ENCODE measurements at regions of chr1 and their contacts with region 1.

Region 1: GRCh38 chr1:84668185-84668584 is 22.1 kb downstream of the SSX2IP start:
- DNase-seq: peak in 1 of 2 experiments; percentile 15
- H3K4me3 ChIP-seq: no peak overlapping the region
- H3K4me3 Mint-ChIP-seq: no peak overlapping the region
- H3K27ac Mint-ChIP-seq: no peak overlapping the region
- H3K4me1 ChIP-seq: no peaks in the 10 kb centered on the region
- H3K4me1 Mint-ChIP-seq: no peaks in the 10 kb centered on the region
- H3K27me3 ChIP-seq: no peaks in the 10 kb centered on the region
- H3K27me3 Mint-ChIP-seq: no peaks in the 10 kb centered on the region
- CTCF ChIP-seq: peak in 1 of 2 experiments; percentile 17

Region 2: GRCh38 chr1:84724128-84724860 is 56.1 kb after region 1 on chr1:
- CTCF ChIA-PET with region 1: no interaction called
- POLR2A ChIA-PET with region 1: no interaction called
- intact Hi-C with region 1: no loop called
- DNase-seq: no peak
- H3K4me3 ChIP-seq: no peak overlapping the region
- H3K4me3 Mint-ChIP-seq: no peak overlapping the region
- H3K27ac Mint-ChIP-seq: no peak overlapping the region
- H3K4me1 ChIP-seq: peaks cover 25% of the 10 kb centered on the region
- H3K4me1 Mint-ChIP-seq: peaks cover 19% of the 10 kb centered on the region
- H3K27me3 ChIP-seq: no peaks in the 10 kb centered on the region
- H3K27me3 Mint-ChIP-seq: no peaks in the 10 kb centered on the region
- CTCF ChIP-seq: no peak

Region 3: DNA sequence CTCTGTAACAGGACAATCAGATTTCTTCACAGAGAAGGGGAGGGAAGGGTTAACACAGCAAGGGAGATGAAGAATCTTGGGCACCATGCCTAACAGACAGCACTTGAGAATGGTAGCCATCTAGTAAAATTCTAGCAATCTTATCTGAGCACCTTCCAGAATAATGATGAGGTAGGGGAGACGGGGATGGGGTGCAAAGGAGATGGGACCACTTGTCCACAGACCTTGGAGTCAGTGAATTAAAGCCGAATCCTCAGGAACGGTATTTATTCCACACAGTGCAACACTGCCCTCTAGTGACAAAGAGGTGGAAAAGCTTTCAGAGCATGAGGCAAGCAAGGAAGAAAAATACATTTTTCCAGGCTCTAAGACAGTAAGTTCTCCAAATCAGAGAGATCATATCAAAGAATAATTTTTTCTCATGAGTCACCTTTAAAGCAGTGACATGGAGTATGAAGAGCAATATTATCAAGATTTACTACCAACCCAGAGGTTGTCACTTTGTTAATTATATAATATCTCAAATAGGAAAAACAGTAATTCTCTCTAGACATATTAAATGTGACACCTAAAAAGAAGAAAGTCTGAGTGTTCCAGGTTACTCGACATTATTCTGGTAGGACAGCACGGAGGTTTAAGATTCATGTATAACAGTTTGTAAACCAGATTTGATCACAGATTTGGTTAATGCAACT is 268.1 kb after region 1 on chr1:
- CTCF ChIA-PET with region 1: no interaction called
- POLR2A ChIA-PET with region 1: no interaction called
- intact Hi-C with region 1: loop called (anchors 5 kb)
- DNase-seq: peak in 1 of 2 experiments; percentile 48
- H3K4me3 ChIP-seq: no peak overlapping the region
- H3K4me3 Mint-ChIP-seq: no peak overlapping the region
- H3K27ac Mint-ChIP-seq: no peak overlapping the region
- H3K4me1 ChIP-seq: no peaks in the 10 kb centered on the region
- H3K4me1 Mint-ChIP-seq: no peaks in the 10 kb centered on the region
- H3K27me3 ChIP-seq: no peaks in the 10 kb centered on the region
- H3K27me3 Mint-ChIP-seq: peaks cover 17% of the 10 kb centered on the region
- CTCF ChIP-seq: peak; percentile 55 to 65